ENCODE measurements at regions of chr4 and their contacts with region 1.

Region 1: GRCh38 chr4:54683616-54684346 is 26.0 kb downstream of the KIT start:
- DNase-seq: no peak
- ATAC-seq: no peak

Region 2: DNA sequence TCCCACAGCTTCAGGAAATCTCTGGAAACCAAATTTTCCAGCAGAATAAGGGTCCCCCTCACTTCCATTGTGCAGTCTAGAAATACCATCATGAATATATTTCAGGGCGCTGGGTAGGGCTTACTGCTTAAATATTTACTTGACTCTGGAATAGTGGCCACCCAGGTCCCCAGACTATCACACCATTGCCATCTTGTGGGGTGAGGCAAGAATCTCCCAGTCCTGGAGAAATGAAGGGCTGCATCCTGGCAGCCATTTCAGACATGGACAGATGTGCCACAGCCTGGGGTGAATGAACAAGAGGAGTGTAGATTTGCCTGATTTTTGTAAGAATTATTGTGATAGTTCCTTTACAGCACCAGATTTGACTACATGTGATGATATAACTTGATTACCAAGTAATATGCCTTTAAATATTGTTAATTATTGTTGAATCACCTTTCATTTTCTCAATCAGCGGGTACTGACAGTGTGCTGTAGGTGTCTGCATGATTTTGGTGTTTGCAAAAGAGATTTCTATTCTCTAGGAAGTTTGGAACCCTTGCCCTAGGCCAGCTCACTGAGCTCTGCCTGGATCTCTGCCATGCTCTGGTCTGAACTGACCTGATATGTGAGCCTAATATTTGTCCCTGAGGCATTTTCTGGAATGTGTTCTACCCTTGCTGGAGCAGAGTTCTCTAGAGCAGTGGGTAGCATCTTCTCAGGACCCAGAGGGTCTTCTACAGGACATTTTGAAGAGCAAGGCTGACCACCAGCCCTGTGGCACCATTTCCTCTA is 157.4 kb after region 1 on chr4:
- intact Hi-C with region 1: loop called (anchors 10 kb)
- DNase-seq: no peak
- ATAC-seq: peak; percentile 56